ENCODE measurements at regions of chr6 and their contacts with region 1.

Region 1: DNA sequence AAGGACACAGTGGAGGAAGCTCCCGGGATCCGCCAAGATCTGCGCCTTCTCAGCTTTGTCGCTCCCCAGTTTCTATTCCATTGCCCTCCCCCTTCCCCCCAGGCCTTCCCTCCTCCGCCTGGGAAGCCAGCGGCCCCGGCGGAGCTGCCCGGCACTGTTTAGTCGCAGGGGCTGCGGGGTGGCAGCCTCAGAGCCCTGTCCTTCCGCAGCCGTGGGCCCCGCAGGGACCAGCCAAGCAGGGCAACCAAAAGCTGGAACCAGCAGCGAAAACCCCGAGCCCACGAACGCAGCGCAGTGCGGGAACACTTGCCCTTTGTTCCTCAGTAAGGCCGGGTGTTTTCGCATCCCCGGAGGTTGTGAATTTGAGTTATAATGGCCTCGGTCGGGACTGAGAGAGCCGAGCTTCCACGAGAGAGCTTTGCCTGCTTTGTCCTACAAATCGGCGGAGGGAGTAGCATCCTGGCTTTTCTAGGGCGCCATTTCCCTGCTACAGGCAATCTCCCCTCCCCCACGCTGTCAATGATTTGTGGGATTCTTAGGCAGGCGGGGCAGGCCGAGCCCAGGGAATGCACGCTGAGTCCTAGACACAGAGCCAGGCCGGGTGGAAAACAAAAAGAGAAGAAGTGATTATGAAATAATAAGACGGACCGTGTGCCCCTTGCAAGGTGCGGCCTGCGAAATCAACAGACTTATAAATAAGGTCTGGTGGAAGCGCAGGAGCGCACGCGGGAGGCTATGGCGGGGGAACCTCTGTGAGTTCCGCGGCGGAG is 4.0 kb upstream of the TUBB2B start:
- DNase-seq: peak; percentile 70
- ATAC-seq: peak; percentile 10
- H3K4me3 Mint-ChIP-seq: peak overlapping the region; percentile 89
- H3K27ac Mint-ChIP-seq: peak overlapping the region; percentile 46
- H3K4me1 Mint-ChIP-seq: peaks cover 51% of the 10 kb centered on the region
- H3K27me3 Mint-ChIP-seq: peaks cover 23% of the 10 kb centered on the region
- CTCF ChIP-seq: no peak

Region 2: DNA sequence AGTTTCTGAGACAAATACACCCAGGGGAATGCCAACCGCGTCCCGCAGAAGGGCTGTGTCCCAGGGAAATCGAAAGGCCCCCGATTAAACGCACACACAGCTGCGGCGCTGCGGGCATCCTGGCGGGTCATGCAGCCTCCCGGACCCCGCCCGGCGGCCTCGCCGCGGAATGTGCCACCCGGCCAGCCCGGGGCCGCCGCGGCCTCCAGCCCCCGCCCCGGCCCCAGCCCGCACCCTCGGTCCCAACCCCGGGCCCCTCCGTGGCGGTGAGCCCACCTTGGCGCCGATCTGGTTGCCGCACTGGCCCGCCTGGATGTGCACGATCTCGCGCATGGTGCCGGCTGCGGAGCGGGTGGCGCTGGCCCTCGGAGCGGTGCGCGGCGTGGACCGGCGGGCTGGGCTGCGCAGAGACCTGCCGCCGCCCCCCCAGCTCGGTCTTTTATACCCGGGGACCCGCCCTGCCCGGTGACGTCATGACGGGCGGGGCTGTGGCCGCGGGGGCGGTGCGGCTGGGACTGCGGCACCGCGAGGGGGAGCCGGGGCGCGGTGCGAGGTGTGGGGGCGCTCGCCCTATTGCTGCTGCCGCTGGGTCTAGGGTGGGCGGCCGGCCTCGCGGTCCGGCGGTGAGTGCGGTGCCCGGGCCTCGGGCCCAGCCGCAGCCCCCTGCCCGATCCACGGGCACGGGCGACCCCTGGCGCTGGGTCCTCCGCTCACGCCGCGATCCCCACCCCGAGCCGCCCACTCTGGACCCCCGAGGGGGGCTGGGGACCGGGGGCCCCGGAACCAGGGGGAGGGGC is 74.1 kb before region 1 on chr6 and contains the start of gene TUBB2A:
- CTCF ChIA-PET with region 1: interaction called, 9 read pairs
- POLR2A ChIA-PET with region 1: interaction called, 24 read pairs
- DNase-seq: peak; percentile 79
- ATAC-seq: peak; percentile 75
- H3K4me3 Mint-ChIP-seq: peak within 1 kb of the TSS; percentile 97
- H3K27ac Mint-ChIP-seq: peak within 1 kb of the TSS; percentile 74; the same call in 1 of the 2 replicates
- H3K4me1 Mint-ChIP-seq: peaks cover 53% of the 10 kb centered on the region
- H3K27me3 Mint-ChIP-seq: no peaks in the 10 kb centered on the region
- CTCF ChIP-seq: no peak
- total RNA-seq, gene TUBB2A: 357 to 403 TPM (median 394 TPM) in 3 replicates

Region 3: DNA sequence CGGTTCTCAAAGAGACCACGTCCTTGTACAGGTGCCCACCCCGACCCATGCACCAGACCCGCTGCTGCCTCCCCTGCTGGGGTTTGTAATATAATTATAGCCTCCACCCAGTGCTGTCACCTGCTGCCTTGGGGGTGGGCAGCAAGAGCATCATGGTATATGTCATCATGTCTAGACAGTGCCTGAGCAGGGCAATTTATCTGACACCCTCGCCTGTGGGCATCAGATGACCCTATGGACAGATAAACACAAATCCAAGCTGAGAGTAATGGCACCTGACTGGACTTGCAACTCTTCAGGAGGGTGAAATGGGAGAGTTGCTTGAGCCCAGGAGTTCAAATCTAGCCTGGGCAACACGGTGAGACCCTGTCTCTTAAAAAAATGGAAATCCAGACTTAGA is 51.1 kb before region 1 on chr6:
- CTCF ChIA-PET with region 1: no interaction called
- POLR2A ChIA-PET with region 1: no interaction called
- DNase-seq: no peak
- ATAC-seq: no peak
- H3K4me3 Mint-ChIP-seq: no peak overlapping the region
- H3K27ac Mint-ChIP-seq: no peak overlapping the region
- H3K4me1 Mint-ChIP-seq: peaks cover 22% of the 10 kb centered on the region
- H3K27me3 Mint-ChIP-seq: no peaks in the 10 kb centered on the region; the same call in 1 of the 2 replicates
- CTCF ChIP-seq: no peak

Region 4: DNA sequence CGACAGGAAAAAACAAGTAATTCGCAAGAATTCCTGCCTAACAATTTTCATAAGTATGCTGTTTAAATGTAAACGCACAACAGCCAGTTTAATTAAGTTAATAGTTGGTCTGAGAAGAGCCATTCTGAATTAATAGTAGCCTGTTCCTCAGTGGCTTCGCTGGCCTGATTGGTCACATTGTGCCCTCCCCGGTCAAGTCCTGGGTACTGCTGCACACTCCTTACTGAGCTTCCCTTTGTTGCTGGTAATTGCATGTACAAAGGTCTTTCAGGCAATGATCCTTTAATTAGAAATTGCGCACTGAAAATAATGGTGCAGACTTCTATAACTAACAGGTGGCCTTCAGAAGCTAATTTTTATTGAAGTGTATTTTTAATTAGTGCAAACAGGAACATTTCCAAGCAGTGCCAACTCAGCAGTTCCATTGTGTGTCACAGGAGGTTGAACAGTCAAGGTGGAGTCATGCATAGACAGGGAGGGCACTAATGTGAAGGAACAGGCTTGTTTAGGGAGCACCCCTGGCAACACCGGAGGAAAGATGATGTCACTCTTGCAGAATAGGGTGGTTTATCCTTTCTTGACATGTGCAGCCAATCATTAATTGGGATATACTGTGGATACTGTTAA is 318.0 kb after region 1 on chr6:
- CTCF ChIA-PET with region 1: no interaction called
- POLR2A ChIA-PET with region 1: no interaction called
- DNase-seq: no peak
- ATAC-seq: no peak
- H3K4me3 Mint-ChIP-seq: no peak overlapping the region
- H3K27ac Mint-ChIP-seq: no peak overlapping the region
- H3K4me1 Mint-ChIP-seq: no peaks in the 10 kb centered on the region
- H3K27me3 Mint-ChIP-seq: peaks cover 13% of the 10 kb centered on the region
- CTCF ChIP-seq: no peak

Measured in WTC11 (cell line).